Endothelial cell of umbilical vein (primary cell): ENCODE measurements at regions of chr22 and their contacts with region 1.

Region 1: GRCh38 chr22:49852898-49853894 is at the start of gene ZBED4:
- DNase-seq: peak; percentile 97
- H3K4me3 ChIP-seq: peak within 1 kb of the TSS; percentile 83 to 99 (median 86)
- H3K27ac ChIP-seq: peak within 1 kb of the TSS; percentile 74
- H3K4me1 ChIP-seq: peaks cover 22% of the 10 kb centered on the region
- H3K27me3 ChIP-seq: peaks cover 8 to 22% of the 10 kb centered on the region in 2 experiments
- CTCF ChIP-seq: no peak
- POLR2A ChIP-seq: peak; percentile 78
- total RNA-seq, gene ZBED4: 18.2 and 18.6 TPM in 2 replicates

Region 2: GRCh38 chr22:49827853-49828598 is 25.2 kb before region 1 on chr22 and contains the start of gene BRD1:
- CTCF ChIA-PET with region 1: no interaction called
- POLR2A ChIA-PET with region 1: no interaction called
- dilution Hi-C with region 1: no loop called
- intact Hi-C with region 1: loop called (anchors 1 kb)
- DNase-seq: peak; percentile 47
- H3K4me3 ChIP-seq: peak within 1 kb of the TSS; percentile 56 to 93 (median 89)
- H3K27ac ChIP-seq: peak within 1 kb of the TSS; percentile 55
- H3K4me1 ChIP-seq: peaks cover 10% of the 10 kb centered on the region
- H3K27me3 ChIP-seq: peaks cover 10 to 11% of the 10 kb centered on the region in 2 experiments
- CTCF ChIP-seq: no peak
- POLR2A ChIP-seq: peak; percentile 19
- total RNA-seq, gene BRD1: 38.8 and 41.1 TPM in 2 replicates

Region 3: DNA sequence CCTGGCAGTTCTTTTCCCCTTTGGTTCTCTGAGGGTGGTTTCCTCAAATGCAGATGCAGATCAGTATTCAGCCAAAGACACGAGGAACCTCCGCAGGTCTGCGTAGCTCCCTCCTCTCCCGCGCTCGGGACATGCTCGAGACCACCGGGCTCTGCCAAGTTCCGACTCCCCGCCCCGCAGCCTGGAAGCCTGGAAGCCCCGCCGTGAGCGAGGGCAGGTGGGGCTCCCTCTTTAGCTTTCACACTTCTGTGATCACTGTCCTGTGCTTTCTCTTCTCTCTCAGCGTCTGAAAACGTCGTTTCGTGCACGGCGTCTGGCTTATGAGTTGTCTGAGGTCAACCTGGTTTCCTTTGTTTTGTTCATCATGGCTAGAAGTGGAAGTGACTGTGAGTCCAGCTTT is 27.1 kb after region 1 on chr22:
- CTCF ChIA-PET with region 1: no interaction called
- POLR2A ChIA-PET with region 1: no interaction called
- dilution Hi-C with region 1: no loop called
- intact Hi-C with region 1: loop called (anchors 2 kb)
- DNase-seq: peak; percentile 86
- H3K4me3 ChIP-seq: no peak overlapping the region
- H3K27ac ChIP-seq: peak overlapping the region; percentile 81
- H3K4me1 ChIP-seq: peaks cover 13% of the 10 kb centered on the region
- H3K27me3 ChIP-seq: no peaks in the 10 kb centered on the region
- CTCF ChIP-seq: no peak
- POLR2A ChIP-seq: no peak

Region 4: DNA sequence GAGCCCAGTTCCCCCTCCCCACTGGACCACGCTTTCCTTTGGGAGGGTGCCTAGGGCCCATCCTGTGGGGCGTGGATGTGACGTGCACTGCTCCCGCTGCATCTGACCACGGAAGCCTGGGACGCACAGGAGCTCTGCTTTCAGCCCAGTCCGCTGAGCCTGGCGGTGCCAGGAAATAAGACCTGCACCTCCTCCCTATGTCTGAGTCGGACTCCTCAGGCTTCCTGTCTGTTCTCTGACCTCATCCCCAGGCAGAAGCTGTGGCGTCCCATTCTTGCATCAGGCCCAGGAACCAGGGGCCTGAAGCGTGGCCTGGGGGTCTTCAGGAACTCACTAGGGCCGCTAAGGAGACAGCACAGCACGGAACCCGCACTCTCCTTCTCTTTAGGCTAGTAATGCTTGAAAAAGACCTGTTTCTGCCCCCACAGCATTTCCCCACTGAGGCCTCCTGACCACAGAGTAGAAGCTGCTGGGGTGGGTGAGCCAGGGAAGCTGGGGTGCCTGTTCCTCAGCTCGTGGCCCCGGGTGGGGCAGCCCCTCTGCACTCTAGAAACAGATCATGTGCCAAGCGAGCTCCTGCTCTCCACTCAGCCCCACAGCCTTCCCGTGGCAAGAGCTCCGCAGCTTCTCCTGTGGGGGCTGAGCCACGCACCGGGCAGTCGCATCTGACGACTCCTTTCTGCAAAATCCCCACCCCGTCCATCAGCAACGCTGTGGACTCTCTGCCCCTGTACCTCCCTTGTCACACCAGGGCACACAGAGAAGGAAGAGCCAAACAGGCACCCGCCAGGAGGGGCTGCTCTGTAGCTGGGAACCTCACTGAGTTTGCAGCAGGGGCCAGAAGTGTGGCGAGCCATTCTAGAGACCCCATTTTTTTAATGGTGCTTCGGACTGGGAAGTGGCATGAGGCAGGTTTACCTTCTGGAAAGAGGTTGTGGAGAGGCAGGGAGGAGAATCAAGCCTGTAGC is 259.2 kb after region 1 on chr22:
- CTCF ChIA-PET with region 1: no interaction called
- POLR2A ChIA-PET with region 1: no interaction called
- dilution Hi-C with region 1: no loop called
- intact Hi-C with region 1: loop called (anchors 5 kb)
- DNase-seq: peak; percentile 90
- H3K4me3 ChIP-seq: no peak overlapping the region
- H3K27ac ChIP-seq: peak overlapping the region; percentile 96
- H3K4me1 ChIP-seq: peaks cover 47% of the 10 kb centered on the region
- H3K27me3 ChIP-seq: no peaks in the 10 kb centered on the region
- CTCF ChIP-seq: no peak
- POLR2A ChIP-seq: peak; percentile 56